Dorsolateral prefrontal cortex (tissue), 120 donors: ENCODE measurements at regions of chr9 and their contacts with region 1.

Region 1: DNA sequence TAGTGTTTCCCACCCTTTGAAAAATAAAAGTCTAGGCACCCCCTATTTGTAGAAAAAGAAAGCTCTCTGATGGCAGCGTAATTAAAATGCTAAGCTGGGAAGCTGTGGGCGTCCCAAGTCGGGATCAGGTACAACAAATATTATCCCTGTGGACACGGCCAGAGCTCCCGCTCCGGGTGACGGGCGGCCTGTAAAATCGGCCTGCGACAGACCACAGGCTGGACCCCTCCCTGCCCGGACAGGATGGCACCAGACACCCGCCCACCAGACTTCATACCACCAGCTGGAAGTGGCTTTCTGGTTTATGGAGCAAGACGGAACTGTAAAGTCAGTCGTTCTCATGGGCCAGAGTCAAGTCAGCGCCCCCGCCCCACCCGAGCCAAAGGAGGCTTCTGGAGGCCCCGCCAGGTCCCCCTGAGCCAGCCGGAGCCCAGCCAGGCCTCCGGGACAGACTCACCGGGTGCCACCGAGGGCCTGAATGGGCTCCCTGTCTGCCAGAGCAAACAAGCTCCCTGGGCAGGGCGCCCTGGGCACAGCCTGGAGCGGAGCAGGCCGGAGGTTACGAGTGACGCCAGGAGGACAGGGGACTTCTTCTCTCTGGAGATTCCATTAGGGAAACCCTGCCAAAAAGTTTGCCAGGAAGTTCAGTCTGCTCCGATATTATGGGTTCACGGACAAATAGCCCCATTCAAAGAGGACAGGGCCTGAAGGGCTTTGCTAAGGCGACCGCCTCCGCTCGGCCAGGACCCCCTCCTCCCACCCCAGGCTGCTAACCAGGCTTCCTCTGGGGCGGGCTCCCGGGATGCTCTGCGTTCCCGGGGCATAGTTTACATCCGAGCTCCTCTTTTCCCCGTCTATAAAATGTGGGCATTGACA is 173.7 kb downstream of the ERCC6L2 start:
- DNase-seq: peak in 9 of 10 donors; percentile 66 to 89 (median 85)
- H3K4me3 ChIP-seq: peak overlapping the region in 40 of 59 donors; percentile 2 to 53 (median 24)
- H3K27ac ChIP-seq: peak overlapping the region in 56 of 59 donors; percentile 16 to 91 (median 85)
- H3K27me3 ChIP-seq: no peaks in the 10 kb centered on the region
- CTCF ChIP-seq: peak in 1 of 56 donors; percentile 16

Region 2: GRCh38 chr9:96116275-96117064 is 67.3 kb after region 1 on chr9:
- intact Hi-C with region 1: loop called (anchors 1 kb)
- DNase-seq: peak; percentile 41 to 96 (median 90)
- H3K4me3 ChIP-seq: peak overlapping the region in 50 of 59 donors; percentile 1 to 63 (median 32)
- H3K27ac ChIP-seq: peak overlapping the region; percentile 75 to 99 (median 94)
- H3K27me3 ChIP-seq: no peaks in the 10 kb centered on the region
- CTCF ChIP-seq: peak in 9 of 56 donors; percentile 8 to 37 (median 12)